Common myeloid progenitor, CD34-positive (primary cell): ENCODE measurements at regions of chr1 and their contacts with region 1.

Region 1: DNA sequence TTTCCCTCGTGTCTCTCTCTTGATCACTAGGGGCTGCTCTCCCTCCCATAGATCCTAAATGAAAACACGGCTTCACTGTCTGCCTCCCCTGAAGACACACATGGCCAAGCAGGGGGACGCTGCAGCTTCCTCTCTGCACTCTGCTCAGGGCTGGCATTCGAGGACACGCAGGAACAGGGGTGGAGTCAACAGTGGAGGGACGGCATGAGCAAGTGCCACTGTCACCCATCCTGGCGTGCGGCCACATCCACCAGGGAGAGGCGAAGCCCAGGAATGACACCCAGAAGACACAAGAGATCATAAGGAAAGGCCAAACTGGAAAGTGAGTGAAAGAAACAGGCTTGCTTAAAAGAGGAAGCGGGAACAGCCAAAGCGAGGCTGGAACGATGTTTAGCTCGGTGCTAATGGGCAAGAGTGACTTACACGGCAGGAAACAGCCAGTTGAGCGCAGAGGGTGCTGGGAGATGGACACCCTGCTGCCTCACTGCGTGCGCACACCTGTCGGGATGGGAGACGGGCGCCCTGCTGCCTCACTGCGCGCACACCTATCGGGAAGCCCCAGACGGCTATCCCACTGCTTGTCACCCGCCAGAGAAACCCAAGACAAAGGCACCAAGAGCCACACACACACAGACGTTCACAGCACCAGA is 13.6 kb upstream of the C1QTNF12 start:
- DNase-seq: peak in 2 of 3 donors; percentile 23 to 38
- H3K4me3 ChIP-seq: no peak overlapping the region
- H3K27ac ChIP-seq: no peak overlapping the region
- H3K4me1 ChIP-seq: peaks cover 0 to 6% (median 4%) of the 10 kb centered on the region in 4 experiments
- H3K27me3 ChIP-seq: no peaks in the 10 kb centered on the region

Region 2: GRCh38 chr1:1231400-1232223 is 28.5 kb before region 1 on chr1 and contains the start of gene SDF4:
- CTCF ChIA-PET with region 1: no interaction called
- POLR2A ChIA-PET with region 1: no interaction called
- DNase-seq: peak; percentile 97 to 98 (median 98)
- H3K4me3 ChIP-seq: peak within 1 kb of the TSS; percentile 79 to 97 (median 94)
- H3K27ac ChIP-seq: peak within 1 kb of the TSS; percentile 84 to 92
- H3K4me1 ChIP-seq: peaks cover 4 to 35% (median 33%) of the 10 kb centered on the region in 4 experiments
- H3K27me3 ChIP-seq: no peaks in the 10 kb centered on the region

Region 3: GRCh38 chr1:1272341-1273208 is 12.5 kb after region 1 on chr1:
- CTCF ChIA-PET with region 1: interaction called, 10 read pairs
- POLR2A ChIA-PET with region 1: interaction called, 8 read pairs
- DNase-seq: no peak
- H3K4me3 ChIP-seq: peak overlapping the region; percentile 81 to 96 (median 89)
- H3K27ac ChIP-seq: peak overlapping the region; percentile 66 to 89
- H3K4me1 ChIP-seq: peaks cover 4 to 34% (median 26%) of the 10 kb centered on the region in 4 experiments
- H3K27me3 ChIP-seq: no peaks in the 10 kb centered on the region

Region 4: GRCh38 chr1:1374929-1375662 is 115.0 kb after region 1 on chr1 and contains the start of gene AURKAIP1:
- CTCF ChIA-PET with region 1: no interaction called
- POLR2A ChIA-PET with region 1: no interaction called
- DNase-seq: peak; percentile 99 to 100 (median 100)
- H3K4me3 ChIP-seq: peak within 1 kb of the TSS; percentile 77 to 97 (median 90)
- H3K27ac ChIP-seq: peak within 1 kb of the TSS; percentile 85 to 91
- H3K4me1 ChIP-seq: peaks cover 0 to 47% (median 40%) of the 10 kb centered on the region in 4 experiments
- H3K27me3 ChIP-seq: peaks cover 0 to 6% (median 0%) of the 10 kb centered on the region in 5 experiments